Activated T-helper 1 cell treated with anti-CD3 and anti-CD28 coated beads, Interleukin-12 subunit alpha, Interleukin-12 subunit beta, Interleukin-2, Interleukin-4 antibody, amounts not matched to agents 30 ng/mL and 10 ng/mL and 1 ng/mL, durations not matched to agents 14 hours and 24 hours and 36 hours (primary cell): ENCODE measurements at regions of chr12 and their contacts with region 1.

Region 1: DNA sequence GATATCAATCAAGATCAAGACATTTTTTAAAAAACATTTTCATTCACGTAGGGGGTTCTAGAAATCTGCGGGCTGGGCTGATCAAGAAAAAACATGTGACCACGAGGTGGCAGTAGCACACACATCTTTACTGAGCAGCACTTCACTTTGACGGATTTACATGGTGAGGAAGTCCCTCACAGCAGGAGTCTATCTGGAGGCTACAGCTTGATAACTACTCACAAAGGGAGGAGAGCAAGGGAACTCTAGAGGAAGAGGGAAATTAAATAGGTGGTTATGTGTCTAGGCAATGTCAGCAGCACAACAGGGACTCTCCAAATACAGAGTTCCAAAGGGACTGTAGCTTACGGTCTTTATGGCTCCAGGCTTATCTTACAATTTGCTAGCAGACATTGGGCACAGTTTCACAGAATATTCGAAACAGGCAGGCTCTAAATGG is 248.1 kb downstream of the DPY19L2 start:
- DNase-seq: peak; percentile 5
- H3K4me3 Mint-ChIP-seq: no peak overlapping the region
- H3K27ac Mint-ChIP-seq: no peak overlapping the region
- H3K4me1 Mint-ChIP-seq: no peaks in the 10 kb centered on the region
- H3K27me3 Mint-ChIP-seq: peaks cover 4% of the 10 kb centered on the region

Region 2: GRCh38 chr12:63802012-63802608 is 381.9 kb after region 1 on chr12:
- intact Hi-C with region 1: loop called (anchors 1 kb)
- DNase-seq: no peak
- H3K4me3 Mint-ChIP-seq: no peak overlapping the region
- H3K27ac Mint-ChIP-seq: no peak overlapping the region
- H3K4me1 Mint-ChIP-seq: no peaks in the 10 kb centered on the region
- H3K27me3 Mint-ChIP-seq: no peaks in the 10 kb centered on the region

Region 3: DNA sequence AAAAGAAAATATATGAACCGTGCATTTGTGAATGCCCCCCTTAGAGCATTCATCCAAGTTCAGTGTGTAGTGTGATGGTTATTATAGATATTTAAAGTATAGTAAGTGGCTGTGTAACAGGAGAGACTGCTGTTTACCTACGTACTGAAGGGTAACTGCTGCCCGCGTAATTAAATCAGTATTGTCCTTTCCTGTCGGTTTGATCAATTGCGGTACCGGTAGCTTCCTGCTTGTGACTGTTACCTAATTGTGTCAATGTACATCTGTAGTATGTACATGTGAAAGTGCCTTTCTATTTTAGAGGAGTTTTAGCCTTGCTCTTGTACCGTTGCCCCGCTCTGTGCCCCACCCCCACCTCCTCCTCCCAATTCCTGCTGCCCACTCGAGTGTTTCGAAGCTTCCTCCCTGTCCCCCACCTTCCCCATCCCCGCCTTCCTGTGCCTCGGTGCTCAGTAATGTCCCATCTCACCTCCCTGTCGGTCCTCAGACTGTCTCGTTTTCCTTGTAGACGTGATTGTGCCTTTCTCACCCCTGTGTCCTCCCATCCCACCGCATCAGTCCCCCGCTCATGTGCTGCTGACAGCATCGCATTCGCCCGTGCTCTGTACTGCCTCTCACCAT is 726.9 kb after region 1 on chr12:
- intact Hi-C with region 1: no loop called
- DNase-seq: no peak
- H3K4me3 Mint-ChIP-seq: no peak overlapping the region
- H3K27ac Mint-ChIP-seq: no peak overlapping the region
- H3K4me1 Mint-ChIP-seq: no peaks in the 10 kb centered on the region
- H3K27me3 Mint-ChIP-seq: no peaks in the 10 kb centered on the region

Region 4: GRCh38 chr12:64256166-64256800 is 836.1 kb after region 1 on chr12:
- intact Hi-C with region 1: loop called (anchors 2 kb)
- DNase-seq: no peak
- H3K4me3 Mint-ChIP-seq: no peak overlapping the region
- H3K27ac Mint-ChIP-seq: no peak overlapping the region
- H3K4me1 Mint-ChIP-seq: no peaks in the 10 kb centered on the region
- H3K27me3 Mint-ChIP-seq: peaks cover 5% of the 10 kb centered on the region